Sigmoid colon (tissue), 7 donors: ENCODE measurements at regions of chr19 and their contacts with region 1.

Region 1: DNA sequence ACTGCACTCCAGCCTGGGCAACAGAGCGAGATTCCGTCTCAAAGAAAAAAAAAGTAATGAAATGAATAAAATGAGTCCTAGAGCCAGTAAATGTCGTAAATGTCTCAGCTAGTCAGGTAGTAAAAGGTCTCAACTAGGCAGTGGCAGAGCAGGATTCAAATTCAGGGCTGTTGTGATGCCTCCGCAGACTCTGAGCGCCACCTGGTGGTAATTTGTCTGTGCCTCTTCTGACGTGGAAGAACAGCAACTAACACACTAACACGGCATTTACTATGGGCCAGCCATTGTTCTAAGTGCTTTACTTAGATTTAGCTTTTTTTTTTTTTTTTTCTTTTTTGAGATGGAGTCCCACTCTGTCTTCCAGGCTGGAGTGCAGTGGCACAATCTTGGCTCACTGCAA is 30.2 kb downstream of the CYP2F1 start:
- DNase-seq: peak; percentile 88
- H3K4me3 ChIP-seq: no peak overlapping the region
- H3K27ac ChIP-seq: no peak overlapping the region
- H3K4me1 ChIP-seq: no peaks in the 10 kb centered on the region
- H3K27me3 ChIP-seq: no peaks in the 10 kb centered on the region
- CTCF ChIP-seq: peak; percentile 74 to 89 (median 83)
- EP300 ChIP-seq: no peak
- POLR2A ChIP-seq: no peak

Region 2: DNA sequence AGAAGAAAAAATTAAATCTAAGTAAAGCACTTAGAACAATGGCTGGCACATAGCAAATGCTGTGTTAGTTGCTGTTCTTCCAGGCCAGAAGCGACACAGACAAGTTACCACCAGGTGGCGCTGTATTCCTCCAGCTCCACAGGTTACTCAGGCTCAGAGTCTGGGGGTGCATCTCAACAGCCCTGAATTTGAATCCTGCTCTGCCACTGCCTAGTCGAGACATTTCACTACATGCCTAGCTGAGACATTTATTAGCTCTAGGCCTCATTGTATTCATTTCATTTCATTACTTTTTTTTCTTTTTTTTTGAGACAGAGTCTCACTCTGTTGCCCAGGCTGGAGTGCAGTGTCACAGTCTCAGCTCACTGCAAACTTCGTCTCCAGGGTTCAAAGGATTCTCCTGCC is 169.8 kb before region 1 on chr19:
- intact Hi-C with region 1: loop called (anchors 1 kb)
- DNase-seq: peak; percentile 74
- H3K4me3 ChIP-seq: no peak overlapping the region
- H3K27ac ChIP-seq: no peak overlapping the region
- H3K4me1 ChIP-seq: no peaks in the 10 kb centered on the region
- H3K27me3 ChIP-seq: no peaks in the 10 kb centered on the region
- CTCF ChIP-seq: peak; percentile 51 to 81 (median 57)
- EP300 ChIP-seq: no peak
- POLR2A ChIP-seq: no peak

Region 3: DNA sequence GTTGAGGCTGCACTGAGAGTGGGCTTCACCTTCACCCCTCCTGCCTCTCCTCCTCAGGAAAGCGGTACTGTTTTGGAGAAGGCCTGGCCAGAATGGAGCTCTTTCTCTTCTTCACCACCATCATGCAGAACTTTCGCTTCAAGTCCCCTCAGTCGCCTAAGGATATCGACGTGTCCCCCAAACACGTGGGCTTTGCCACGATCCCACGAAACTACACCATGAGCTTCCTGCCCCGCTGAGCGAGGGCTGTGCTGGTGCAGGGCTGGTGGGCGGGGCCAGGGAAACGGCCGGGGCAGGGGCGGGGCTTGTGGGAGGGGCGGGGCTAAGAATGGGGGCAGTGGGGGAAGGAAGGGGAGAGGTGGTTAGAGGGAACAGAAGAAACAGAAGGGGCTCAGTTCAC is 48.7 kb before region 1 on chr19:
- intact Hi-C with region 1: no loop called
- DNase-seq: no peak
- H3K4me3 ChIP-seq: no peak overlapping the region
- H3K27ac ChIP-seq: no peak overlapping the region
- H3K4me1 ChIP-seq: no peaks in the 10 kb centered on the region
- H3K27me3 ChIP-seq: peaks cover under 1 to 16% (median 6%) of the 10 kb centered on the region in 3 donors
- CTCF ChIP-seq: no peak
- EP300 ChIP-seq: no peak
- POLR2A ChIP-seq: no peak

Region 4: GRCh38 chr19:41123716-41124294 is 20.6 kb before region 1 on chr19:
- intact Hi-C with region 1: loop called (anchors 2 kb)
- DNase-seq: no peak
- H3K4me3 ChIP-seq: no peak overlapping the region
- H3K27ac ChIP-seq: no peak overlapping the region
- H3K4me1 ChIP-seq: peaks cover 0 to 13% (median 7%) of the 10 kb centered on the region in 4 donors
- H3K27me3 ChIP-seq: no peaks in the 10 kb centered on the region
- CTCF ChIP-seq: no peak
- EP300 ChIP-seq: no peak
- POLR2A ChIP-seq: no peak